ENCODE measurements at regions of chr6 and their contacts with region 1.

Region 1: DNA sequence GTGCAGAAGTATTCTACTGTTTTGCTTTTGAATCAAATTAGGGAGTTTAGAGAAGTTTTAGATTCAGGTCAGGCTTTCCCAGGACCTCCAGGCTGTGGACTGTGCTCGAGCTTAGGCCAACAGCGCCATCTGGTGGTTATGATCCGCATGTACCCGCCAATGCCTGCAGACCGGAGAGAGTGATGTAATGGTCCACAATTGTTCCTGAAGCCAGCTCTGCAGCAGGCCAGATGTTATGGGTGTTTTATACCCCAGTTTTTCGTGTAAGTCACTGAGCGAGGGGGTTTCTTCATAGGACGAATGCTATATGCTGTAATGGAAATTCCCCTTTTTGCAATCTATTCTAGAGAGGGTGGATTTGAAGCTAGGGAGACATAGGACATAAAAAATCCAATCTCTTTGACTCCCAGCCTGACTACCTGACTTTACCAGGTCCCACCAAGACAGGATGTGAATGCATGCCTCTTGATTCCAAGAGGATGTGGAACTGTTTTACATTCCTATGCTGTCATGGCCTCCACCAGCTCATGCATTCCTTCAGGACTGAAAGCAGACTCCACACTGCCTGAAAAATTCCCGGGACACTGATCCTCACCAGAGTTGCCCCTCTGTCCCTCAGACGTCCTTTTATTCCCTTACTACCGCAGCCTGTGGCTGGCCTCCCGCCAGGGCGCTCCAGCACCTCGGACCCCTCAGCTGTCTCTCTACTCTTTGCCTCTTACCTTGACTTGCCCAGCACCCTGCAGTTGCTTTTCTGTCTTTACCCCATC is 41.2 kb upstream of the LY86 start:
- H3K4me3 Mint-ChIP-seq: peak overlapping the region; percentile 52
- H3K27ac Mint-ChIP-seq: peak overlapping the region; percentile 60
- H3K4me1 Mint-ChIP-seq: peaks cover 42% of the 10 kb centered on the region
- H3K27me3 Mint-ChIP-seq: peaks cover 34% of the 10 kb centered on the region

Region 2: GRCh38 chr6:5471044-5471443 is 1076.3 kb before region 1 on chr6:
- intact Hi-C with region 1: loop called (anchors 5 kb)
- H3K4me3 Mint-ChIP-seq: no peak overlapping the region
- H3K27ac Mint-ChIP-seq: no peak overlapping the region
- H3K4me1 Mint-ChIP-seq: peaks cover 3% of the 10 kb centered on the region
- H3K27me3 Mint-ChIP-seq: no peaks in the 10 kb centered on the region

Region 3: GRCh38 chr6:6057424-6058053 is 489.8 kb before region 1 on chr6:
- intact Hi-C with region 1: loop called (anchors 2 kb)
- H3K4me3 Mint-ChIP-seq: no peak overlapping the region
- H3K27ac Mint-ChIP-seq: no peak overlapping the region
- H3K4me1 Mint-ChIP-seq: no peaks in the 10 kb centered on the region
- H3K27me3 Mint-ChIP-seq: peaks cover 49% of the 10 kb centered on the region

Region 4: GRCh38 chr6:6191475-6191874 is 355.8 kb before region 1 on chr6:
- intact Hi-C with region 1: loop called (anchors 10 kb)
- H3K4me3 Mint-ChIP-seq: no peak overlapping the region
- H3K27ac Mint-ChIP-seq: no peak overlapping the region
- H3K4me1 Mint-ChIP-seq: peaks cover 40% of the 10 kb centered on the region
- H3K27me3 Mint-ChIP-seq: no peaks in the 10 kb centered on the region

Region 5: GRCh38 chr6:6315660-6316059 is 231.6 kb before region 1 on chr6:
- intact Hi-C with region 1: loop called (anchors 5 kb)
- H3K4me3 Mint-ChIP-seq: peak overlapping the region; percentile 86
- H3K27ac Mint-ChIP-seq: peak overlapping the region; percentile 91
- H3K4me1 Mint-ChIP-seq: peaks cover 28% of the 10 kb centered on the region
- H3K27me3 Mint-ChIP-seq: no peaks in the 10 kb centered on the region

Region 6: DNA sequence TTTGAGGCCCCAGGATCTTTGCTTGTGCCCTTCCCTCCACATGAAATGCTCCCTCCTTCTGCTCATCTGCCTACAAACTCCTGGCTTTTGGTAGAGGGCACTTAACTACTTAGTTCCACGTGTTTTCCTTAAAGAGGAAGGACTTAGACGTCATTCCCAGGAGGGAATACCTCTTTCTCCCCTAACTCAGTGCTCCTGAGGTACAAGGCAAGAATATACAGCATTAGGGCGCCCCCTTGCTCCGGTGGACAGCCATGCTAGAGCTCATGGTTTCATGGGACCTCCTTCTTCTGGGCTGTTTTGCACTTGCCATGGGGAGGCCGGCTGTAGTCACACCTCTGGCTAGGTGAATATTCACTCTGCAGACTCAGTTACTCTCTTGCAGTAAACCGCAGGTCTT is 52.6 kb before region 1 on chr6:
- intact Hi-C with region 1: loop called (anchors 2 kb)
- H3K4me3 Mint-ChIP-seq: peak overlapping the region; percentile 45
- H3K27ac Mint-ChIP-seq: peak overlapping the region; percentile 83
- H3K4me1 Mint-ChIP-seq: peaks cover 52% of the 10 kb centered on the region
- H3K27me3 Mint-ChIP-seq: no peaks in the 10 kb centered on the region